Naive thymus-derived CD4-positive, alpha-beta T cell (primary cell): ENCODE measurements at regions of chr1 and their contacts with region 1.

Region 1: DNA sequence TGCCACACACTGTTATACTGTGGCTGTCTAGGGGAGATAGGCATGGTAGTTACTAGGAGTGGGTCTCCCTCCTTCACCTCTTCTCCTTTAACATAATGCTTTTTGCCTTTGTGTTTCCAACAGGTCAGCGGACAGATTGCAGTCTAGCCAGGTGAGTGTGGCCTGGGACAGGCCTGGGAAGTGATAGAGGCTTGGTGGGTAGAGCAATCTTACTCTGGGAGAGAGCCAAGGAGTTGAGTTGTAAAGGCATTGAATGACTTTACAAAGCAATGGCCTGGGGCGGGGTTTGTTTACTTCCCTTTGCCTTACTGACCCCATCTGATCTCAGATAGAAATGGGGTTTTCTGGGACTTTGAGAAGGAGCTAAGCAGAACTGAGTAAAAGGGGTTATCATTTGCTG is 51.0 kb upstream of the IKBKE start:
- DNase-seq: no peak
- ATAC-seq: no peak
- H3K4me3 ChIP-seq: no peak overlapping the region
- H3K4me3 Mint-ChIP-seq: no peak overlapping the region
- H3K27ac ChIP-seq: no peak overlapping the region
- H3K27ac Mint-ChIP-seq: no peak overlapping the region
- H3K4me1 ChIP-seq: no peaks in the 10 kb centered on the region
- H3K4me1 Mint-ChIP-seq: peaks cover 0 to 9% (median 0%) of the 10 kb centered on the region in 7 donors
- H3K27me3 ChIP-seq: no peaks in the 10 kb centered on the region
- H3K27me3 Mint-ChIP-seq: no peaks in the 10 kb centered on the region

Region 2: GRCh38 chr1:206050655-206051235 is 368.5 kb before region 1 on chr1:
- CTCF ChIA-PET with region 1: no interaction called
- POLR2A ChIA-PET with region 1: no interaction called
- intact Hi-C with region 1: loop called in 1 of 2 experiments (anchors 10 kb)
- DNase-seq: peak in 6 of 9 donors; percentile 3 to 54 (median 22)
- ATAC-seq: peak; percentile 94
- H3K4me3 ChIP-seq: no peak overlapping the region
- H3K4me3 Mint-ChIP-seq: peak overlapping the region in 7 of 10 donors; percentile 13 to 63 (median 18)
- H3K27ac ChIP-seq: no peak overlapping the region
- H3K27ac Mint-ChIP-seq: peak overlapping the region in 6 of 9 donors; percentile 11 to 90 (median 53)
- H3K4me1 ChIP-seq: peaks cover 0 to 7% of the 10 kb centered on the region in 2 donors
- H3K4me1 Mint-ChIP-seq: peaks cover 7 to 37% (median 18%) of the 10 kb centered on the region in 7 donors
- H3K27me3 ChIP-seq: no peaks in the 10 kb centered on the region
- H3K27me3 Mint-ChIP-seq: peaks cover 0 to 17% (median 0%) of the 10 kb centered on the region in 5 donors